ENCODE measurements at regions of chr19 and their contacts with region 1.

Region 1: GRCh38 chr19:49570138-49570856 is 10.1 kb downstream of the NOSIP start:
- DNase-seq: peak; percentile 54 to 69
- H3K4me3 ChIP-seq: no peak overlapping the region
- H3K27ac ChIP-seq: no peak overlapping the region
- H3K4me1 ChIP-seq: 0 out of 2 replicates have a peak, but pooled peaks cover 7% of the 10 kb centered on the region
- H3K27me3 ChIP-seq: no peaks in the 10 kb centered on the region
- CTCF ChIP-seq: peak; percentile 99

Region 2: DNA sequence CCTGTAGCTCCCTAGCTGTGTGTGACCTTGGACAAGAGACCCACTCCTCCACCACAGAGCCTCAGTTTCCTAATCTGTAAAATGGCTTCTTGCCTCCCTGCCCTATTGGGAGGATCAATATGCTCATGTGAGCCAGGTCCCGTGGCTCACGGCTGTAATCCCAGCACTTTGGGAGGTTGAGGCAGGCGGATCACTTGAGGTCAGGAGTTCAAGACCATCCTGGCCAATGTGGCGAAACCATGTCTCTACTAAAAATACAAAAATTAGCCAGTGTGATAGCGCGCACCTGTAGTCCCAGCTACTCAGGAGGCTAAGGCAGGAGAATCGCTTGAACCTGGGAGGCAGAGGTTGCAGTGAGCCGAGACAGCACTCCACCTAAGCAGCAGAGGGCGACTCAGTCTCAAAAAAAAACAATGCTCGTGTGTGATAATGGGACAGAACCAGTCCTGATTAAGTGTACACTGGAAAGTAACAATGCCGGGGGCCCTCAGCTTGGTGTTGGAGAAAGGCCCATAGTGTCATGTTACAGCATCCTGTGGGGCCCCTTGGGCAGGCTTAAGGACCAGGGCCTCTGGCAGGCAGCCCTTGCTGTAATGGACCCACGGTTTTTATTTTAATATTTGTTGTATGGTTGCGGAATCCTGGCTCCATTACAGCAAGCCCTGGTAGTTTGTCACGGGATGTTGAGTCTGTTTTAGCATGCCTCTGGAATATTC is 67.3 kb before region 1 on chr19:
- CTCF ChIA-PET with region 1: no interaction called
- POLR2A ChIA-PET with region 1: no interaction called
- intact Hi-C with region 1: loop called (anchors 1 kb)
- DNase-seq: peak in 1 of 2 experiments; percentile 46
- H3K4me3 ChIP-seq: no peak overlapping the region
- H3K27ac ChIP-seq: no peak overlapping the region
- H3K4me1 ChIP-seq: peaks cover 6% of the 10 kb centered on the region
- H3K27me3 ChIP-seq: no peaks in the 10 kb centered on the region
- CTCF ChIP-seq: peak; percentile 79